ENCODE measurements at regions of chr3 and their contacts with region 1.

Region 1: GRCh38 chr3:132029182-132029902 is 5.5 kb downstream of the CPNE4 start:
- DNase-seq: peak; percentile 88
- H3K4me3 ChIP-seq: no peak overlapping the region
- H3K27ac ChIP-seq: no peak overlapping the region
- H3K4me1 ChIP-seq: peaks cover 0 to 12% (median under 1%) of the 10 kb centered on the region in 6 donors
- H3K27me3 ChIP-seq: peaks cover 0 to 43% (median 16%) of the 10 kb centered on the region in 7 donors
- CTCF ChIP-seq: peak; percentile 20 to 78 (median 61)
- POLR2A ChIP-seq: no peak

Region 2: DNA sequence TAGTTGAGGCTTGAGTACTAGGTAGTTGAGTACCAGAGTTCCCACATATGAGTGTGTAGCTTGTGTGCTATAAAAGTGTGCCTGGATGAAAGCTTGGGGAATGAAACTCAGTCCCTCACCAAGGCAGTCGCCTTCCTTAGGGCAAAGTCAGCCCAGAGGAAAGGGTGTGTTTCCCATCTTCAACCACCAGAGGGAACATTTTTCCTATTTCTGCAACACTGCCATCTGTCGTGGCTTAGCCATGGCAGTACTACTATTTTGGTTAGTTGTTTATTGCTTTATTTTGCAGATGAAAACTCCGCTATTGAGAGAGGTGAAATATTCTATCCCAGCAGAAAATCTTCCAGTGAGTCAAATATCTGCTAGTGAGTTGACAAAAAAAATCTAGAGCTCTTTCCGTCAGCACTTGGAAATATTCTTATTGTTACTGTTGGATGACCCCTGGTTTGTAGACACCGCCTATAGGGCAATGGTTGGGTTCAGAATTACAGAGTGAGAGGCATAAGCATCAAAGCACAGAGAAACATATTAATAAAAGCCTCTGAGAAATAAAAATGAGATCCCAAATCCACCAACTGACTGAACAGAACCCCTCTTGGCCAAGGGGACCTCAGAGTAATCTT is 234.5 kb before region 1 on chr3:
- intact Hi-C with region 1: loop called (anchors 5 kb)
- DNase-seq: no peak
- H3K4me3 ChIP-seq: no peak overlapping the region
- H3K27ac ChIP-seq: no peak overlapping the region
- H3K4me1 ChIP-seq: peaks cover 0 to 18% (median 5%) of the 10 kb centered on the region in 6 donors
- H3K27me3 ChIP-seq: peaks cover 0 to 13% (median 0%) of the 10 kb centered on the region in 7 donors
- CTCF ChIP-seq: peak; percentile 62 to 89 (median 80)
- POLR2A ChIP-seq: no peak